Panc1 (cell line): ENCODE measurements at regions of chr1 and their contacts with region 1.

Region 1: DNA sequence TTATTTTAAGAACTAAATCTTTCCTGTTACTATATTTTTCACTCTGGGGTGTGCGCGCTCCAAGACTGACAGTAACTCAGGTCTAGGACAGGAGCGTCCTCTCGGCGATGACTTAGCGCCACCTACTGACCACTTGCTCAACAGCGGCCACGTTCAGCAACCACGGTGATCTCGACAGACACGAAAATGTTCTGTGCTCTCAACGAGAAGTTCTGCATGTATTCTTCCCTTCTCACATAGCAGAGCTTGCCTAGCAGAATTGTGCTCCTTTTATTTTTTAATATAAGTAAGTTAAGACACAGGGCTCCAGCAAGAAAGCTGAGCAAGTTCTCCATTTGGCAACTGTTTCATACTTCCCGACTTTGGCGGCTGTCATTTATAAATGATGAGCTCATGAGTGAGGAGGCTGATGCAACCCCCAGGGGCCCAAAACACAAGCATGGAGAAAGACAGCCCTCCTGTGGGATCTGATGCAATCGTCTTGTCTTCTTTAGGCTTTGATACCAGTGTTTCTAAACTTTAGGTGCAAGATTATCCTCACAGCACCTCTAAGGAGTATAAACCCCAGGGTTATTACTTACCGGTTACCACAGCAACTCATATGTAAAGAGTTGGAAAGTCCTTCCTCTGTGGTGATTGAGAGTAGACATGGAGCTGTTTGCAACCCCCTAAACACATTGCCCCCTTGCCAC is 92.6 kb downstream of the HHIPL2 start:
- DNase-seq: peak; percentile 70
- ATAC-seq: peak; percentile 98
- H3K4me3 ChIP-seq: peak overlapping the region in 1 of 2 experiments; percentile 35; a peak in 2 of 4 replicates
- H3K27ac ChIP-seq: no peak overlapping the region
- H3K4me1 ChIP-seq: no peaks in the 10 kb centered on the region
- H3K27me3 ChIP-seq: 0 out of 2 replicates have a peak, but pooled peaks cover 2% of the 10 kb centered on the region
- CTCF ChIP-seq: peak; percentile 98

Region 2: GRCh38 chr1:220810179-220810653 is 1645.1 kb before region 1 on chr1:
- CTCF ChIA-PET with region 1: no interaction called
- POLR2A ChIA-PET with region 1: no interaction called
- in situ Hi-C with region 1: no loop called
- intact Hi-C with region 1: loop called (anchors 10 kb)
- DNase-seq: peak; percentile 39
- ATAC-seq: peak; percentile 91
- H3K4me3 ChIP-seq: peak overlapping the region in 1 of 2 experiments; percentile 16; a peak in 1 of 4 replicates
- H3K27ac ChIP-seq: no peak overlapping the region
- H3K4me1 ChIP-seq: no peaks in the 10 kb centered on the region
- H3K27me3 ChIP-seq: no peaks in the 10 kb centered on the region; the same call in 1 of the 2 replicates
- CTCF ChIP-seq: peak; percentile 96

Region 3: GRCh38 chr1:221741711-221742554 is 713.4 kb before region 1 on chr1 and contains the start of gene DUSP10:
- CTCF ChIA-PET with region 1: no interaction called
- POLR2A ChIA-PET with region 1: no interaction called
- in situ Hi-C with region 1: no loop called
- intact Hi-C with region 1: loop called (anchors 10 kb)
- DNase-seq: peak; percentile 98
- ATAC-seq: peak; percentile 96
- H3K4me3 ChIP-seq: peak within 1 kb of the TSS; percentile 79 to 94
- H3K27ac ChIP-seq: peak within 1 kb of the TSS; percentile 51; the same call in 1 of the 2 replicates
- H3K4me1 ChIP-seq: no peaks in the 10 kb centered on the region; the same call in 1 of the 2 replicates
- H3K27me3 ChIP-seq: no peaks in the 10 kb centered on the region; the same call in 1 of the 2 replicates
- CTCF ChIP-seq: no peak
- total RNA-seq, gene DUSP10: 1.4 TPM

Region 4: GRCh38 chr1:222095606-222096475 is 359.5 kb before region 1 on chr1:
- CTCF ChIA-PET with region 1: no interaction called
- POLR2A ChIA-PET with region 1: no interaction called
- in situ Hi-C with region 1: no loop called
- intact Hi-C with region 1: loop called (anchors 10 kb)
- DNase-seq: peak; percentile 32
- ATAC-seq: peak; percentile 72; the same call in 1 of the 2 replicates
- H3K4me3 ChIP-seq: no peak overlapping the region
- H3K27ac ChIP-seq: no peak overlapping the region
- H3K4me1 ChIP-seq: no peaks in the 10 kb centered on the region
- H3K27me3 ChIP-seq: no peaks in the 10 kb centered on the region
- CTCF ChIP-seq: peak; percentile 91